WTC11 (cell line): ENCODE measurements at regions of chr7 and their contacts with region 1.

Region 1: DNA sequence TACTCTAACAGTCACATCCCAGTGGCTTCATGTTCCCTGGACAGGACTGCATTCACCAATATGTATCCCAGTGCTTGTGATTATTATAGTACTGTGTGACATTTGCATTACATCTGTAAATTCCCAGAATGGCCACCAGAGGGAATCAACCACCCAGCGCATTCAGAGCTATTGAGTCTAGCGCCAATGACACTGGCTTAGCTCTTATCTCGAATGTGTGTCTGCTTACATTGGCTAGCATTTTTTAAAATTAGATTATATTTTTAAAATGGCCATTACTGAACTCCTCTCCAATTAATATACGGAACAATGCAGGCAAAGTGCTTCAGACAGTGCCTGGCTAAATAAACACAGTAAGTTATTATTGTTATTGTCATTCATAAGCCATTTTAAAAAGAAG is 36.3 kb downstream of the TRIL start:
- DNase-seq: peak; percentile 34
- ATAC-seq: peak; percentile 88
- H3K4me3 Mint-ChIP-seq: no peak overlapping the region
- H3K27ac Mint-ChIP-seq: no peak overlapping the region
- H3K4me1 Mint-ChIP-seq: peaks cover 29% of the 10 kb centered on the region
- H3K27me3 Mint-ChIP-seq: peaks cover 8% of the 10 kb centered on the region
- CTCF ChIP-seq: peak; percentile 85

Region 2: DNA sequence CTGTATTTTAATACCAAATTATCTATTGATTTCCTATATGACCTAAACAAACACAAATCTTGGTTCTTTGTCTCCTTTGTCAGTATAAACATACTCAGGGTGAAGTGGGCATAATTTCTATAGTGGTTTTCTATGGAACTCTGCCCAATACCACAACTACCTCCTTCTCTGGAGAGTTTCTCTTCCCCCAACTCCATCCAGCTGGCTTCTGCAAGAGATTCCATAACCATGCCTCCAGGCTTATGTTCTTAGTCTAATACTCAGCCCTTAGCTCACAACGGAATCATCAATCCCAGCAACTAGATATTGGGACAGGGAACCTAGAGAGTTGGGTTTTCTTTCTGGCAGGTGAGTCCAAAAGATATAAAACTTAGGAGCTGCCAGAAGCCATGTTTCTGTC is 91.0 kb before region 1 on chr7:
- CTCF ChIA-PET with region 1: no interaction called
- POLR2A ChIA-PET with region 1: no interaction called
- DNase-seq: no peak
- ATAC-seq: no peak
- H3K4me3 Mint-ChIP-seq: no peak overlapping the region
- H3K27ac Mint-ChIP-seq: no peak overlapping the region
- H3K4me1 Mint-ChIP-seq: no peaks in the 10 kb centered on the region
- H3K27me3 Mint-ChIP-seq: no peaks in the 10 kb centered on the region
- CTCF ChIP-seq: no peak

Region 3: DNA sequence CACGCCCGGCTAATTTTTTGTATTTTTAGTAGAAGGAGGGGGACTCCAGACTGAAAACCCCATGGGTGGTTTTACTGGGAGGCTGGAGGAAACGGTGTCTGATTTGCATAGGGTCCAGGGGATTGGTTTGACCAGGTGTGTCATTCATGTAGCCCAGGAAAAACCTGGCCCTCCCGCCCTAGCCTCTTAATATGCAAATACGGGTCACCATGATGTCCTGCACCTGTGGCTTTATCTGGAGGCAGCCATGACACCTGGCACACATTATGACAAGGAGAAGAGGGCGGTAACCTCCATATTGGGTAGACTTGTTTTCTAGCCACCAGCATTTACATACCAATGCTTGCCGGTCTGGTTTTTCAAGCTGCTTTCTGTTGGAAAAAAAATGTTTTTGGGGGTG is 31.7 kb before region 1 on chr7:
- CTCF ChIA-PET with region 1: interaction called, 10 read pairs
- POLR2A ChIA-PET with region 1: no interaction called
- DNase-seq: peak; percentile 81
- ATAC-seq: peak; percentile 92
- H3K4me3 Mint-ChIP-seq: peak overlapping the region; percentile 35
- H3K27ac Mint-ChIP-seq: peak overlapping the region; percentile 96
- H3K4me1 Mint-ChIP-seq: peaks cover 49% of the 10 kb centered on the region
- H3K27me3 Mint-ChIP-seq: no peaks in the 10 kb centered on the region
- CTCF ChIP-seq: no peak

Region 4: DNA sequence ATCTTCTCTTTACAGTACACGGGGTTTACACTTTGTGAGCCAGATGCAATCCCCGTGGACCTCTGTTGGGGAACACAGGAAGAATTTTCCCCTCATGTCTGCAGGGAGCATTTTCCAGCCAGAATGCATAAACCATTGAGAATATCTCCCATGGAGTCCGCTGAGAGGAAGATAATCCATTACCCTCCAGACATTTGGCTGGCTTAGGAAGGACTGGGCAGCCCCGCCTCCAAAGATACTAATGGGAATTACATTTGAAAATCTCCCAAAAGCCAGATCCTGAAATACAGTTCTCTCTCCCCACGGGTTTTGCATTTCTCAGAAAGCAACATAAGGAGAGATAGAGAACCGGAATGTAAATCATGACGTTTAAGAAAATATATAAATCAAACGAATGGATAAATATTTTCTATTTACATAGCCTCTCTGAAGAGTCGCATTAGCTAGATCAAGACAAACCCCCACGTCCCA is 17.2 kb before region 1 on chr7:
- CTCF ChIA-PET with region 1: interaction called, 21 read pairs
- POLR2A ChIA-PET with region 1: no interaction called
- DNase-seq: no peak
- ATAC-seq: no peak
- H3K4me3 Mint-ChIP-seq: peak overlapping the region; percentile 6; the same call in 1 of the 2 replicates
- H3K27ac Mint-ChIP-seq: peak overlapping the region; percentile 42; the same call in 1 of the 2 replicates
- H3K4me1 Mint-ChIP-seq: peaks cover 47% of the 10 kb centered on the region
- H3K27me3 Mint-ChIP-seq: no peaks in the 10 kb centered on the region
- CTCF ChIP-seq: no peak

Region 5: DNA sequence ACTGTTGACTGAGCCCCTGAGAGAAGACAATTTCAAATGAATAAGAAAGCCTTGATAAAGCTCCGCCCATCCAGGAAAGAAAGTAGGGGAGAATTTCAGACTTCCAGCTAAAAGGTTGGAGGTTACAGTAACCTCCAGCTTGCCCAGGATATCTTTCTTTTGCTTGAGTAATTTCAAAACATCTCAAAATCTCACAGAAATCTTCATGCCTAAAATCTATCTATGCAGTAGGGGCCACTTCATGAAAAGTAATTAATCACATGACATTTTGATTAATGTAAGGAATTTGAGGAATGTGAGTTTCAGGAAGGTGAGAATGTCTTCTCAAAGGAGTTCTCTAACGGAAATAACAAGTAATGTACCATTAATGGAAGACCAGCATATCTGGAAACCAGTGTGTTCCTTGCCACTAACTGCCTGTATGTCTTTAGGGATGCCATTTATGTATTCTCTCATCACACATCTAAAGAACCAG is 12.1 kb after region 1 on chr7:
- CTCF ChIA-PET with region 1: interaction called, 67 read pairs
- POLR2A ChIA-PET with region 1: no interaction called
- DNase-seq: no peak
- ATAC-seq: no peak; the same call in 1 of the 2 replicates
- H3K4me3 Mint-ChIP-seq: no peak overlapping the region
- H3K27ac Mint-ChIP-seq: peak overlapping the region; percentile 45; the same call in 1 of the 2 replicates
- H3K4me1 Mint-ChIP-seq: peaks cover 21% of the 10 kb centered on the region
- H3K27me3 Mint-ChIP-seq: no peaks in the 10 kb centered on the region; the same call in 1 of the 2 replicates
- CTCF ChIP-seq: no peak

Region 6: DNA sequence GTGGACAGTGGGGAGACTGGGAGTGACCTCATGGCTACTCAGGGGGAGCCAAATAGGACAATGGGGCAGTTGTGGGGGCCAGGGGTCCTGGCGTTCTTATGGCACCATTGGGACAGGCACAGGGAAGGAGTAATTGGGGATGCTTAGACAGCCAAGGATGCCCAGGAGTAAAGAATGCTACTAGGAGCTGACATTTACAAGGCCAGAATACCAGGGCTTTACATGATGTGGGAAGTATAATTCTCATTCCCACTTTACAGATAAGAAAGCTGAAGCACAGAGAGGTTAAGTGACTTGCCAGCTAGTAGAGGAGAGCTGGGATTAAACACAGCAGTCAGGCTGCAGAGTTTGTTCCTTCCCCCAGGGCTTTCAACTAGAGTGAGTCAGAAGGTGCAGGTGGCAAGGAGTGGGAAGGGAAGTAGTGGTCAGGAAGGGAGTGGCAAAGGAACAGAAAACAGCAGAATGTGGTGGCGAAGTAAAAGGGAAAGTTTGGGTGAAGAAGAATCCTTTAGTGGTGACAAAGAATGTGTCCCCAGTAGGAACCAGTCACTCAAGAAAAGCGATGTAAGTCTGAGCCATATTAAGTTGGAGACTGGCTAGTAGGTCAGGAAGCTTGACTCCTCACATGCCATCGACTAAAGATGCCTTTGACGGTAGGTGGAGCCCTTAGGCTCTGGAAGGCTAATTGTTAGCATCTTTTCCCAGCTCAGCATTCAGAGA is 191.7 kb after region 1 on chr7:
- CTCF ChIA-PET with region 1: interaction called, 26 read pairs
- POLR2A ChIA-PET with region 1: no interaction called
- DNase-seq: peak; percentile 28
- ATAC-seq: peak; percentile 92
- H3K4me3 Mint-ChIP-seq: no peak overlapping the region
- H3K27ac Mint-ChIP-seq: peak overlapping the region; percentile 66
- H3K4me1 Mint-ChIP-seq: peaks cover 33% of the 10 kb centered on the region
- H3K27me3 Mint-ChIP-seq: no peaks in the 10 kb centered on the region
- CTCF ChIP-seq: no peak

Region 7: DNA sequence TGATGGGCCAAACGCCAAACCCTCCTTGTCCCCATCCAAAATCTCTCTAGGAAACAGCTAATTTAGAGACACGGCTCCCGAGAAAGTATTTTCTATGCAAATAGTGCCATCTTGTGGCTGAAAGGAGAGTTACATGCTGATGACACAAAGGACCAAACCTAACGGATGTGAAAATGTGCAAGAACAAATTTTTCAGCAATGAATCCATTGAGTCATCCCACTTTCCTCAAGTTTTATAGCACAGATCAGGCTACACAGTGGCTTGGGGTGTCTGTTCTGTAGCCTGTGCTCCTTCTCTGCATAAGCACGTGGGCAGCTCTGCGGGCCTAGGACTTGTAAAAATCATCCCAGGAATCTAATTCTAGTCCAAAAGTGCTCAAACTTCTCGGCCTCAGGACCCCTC is 487.0 kb after region 1 on chr7:
- CTCF ChIA-PET with region 1: interaction called, 44 read pairs
- POLR2A ChIA-PET with region 1: no interaction called
- DNase-seq: peak; percentile 34
- ATAC-seq: peak; percentile 60
- H3K4me3 Mint-ChIP-seq: peak overlapping the region; percentile 33; the same call in 1 of the 2 replicates
- H3K27ac Mint-ChIP-seq: no peak overlapping the region
- H3K4me1 Mint-ChIP-seq: peaks cover 19% of the 10 kb centered on the region
- H3K27me3 Mint-ChIP-seq: no peaks in the 10 kb centered on the region
- CTCF ChIP-seq: peak; percentile 84